Right cardiac atrium (tissue), 5 donors: ENCODE measurements at regions of chr5 and their contacts with region 1.

Region 1: GRCh38 chr5:149489605-149490037 is 61.6 kb downstream of the CSNK1A1 start:
- DNase-seq: peak in 2 of 3 donors; percentile 68 to 85
- ATAC-seq: peak in 1 of 2 donors; percentile 5
- H3K4me3 ChIP-seq: no peak overlapping the region
- H3K27ac ChIP-seq: peak overlapping the region; percentile 55
- H3K4me1 ChIP-seq: peaks cover 9% of the 10 kb centered on the region
- H3K27me3 ChIP-seq: no peaks in the 10 kb centered on the region

Region 2: DNA sequence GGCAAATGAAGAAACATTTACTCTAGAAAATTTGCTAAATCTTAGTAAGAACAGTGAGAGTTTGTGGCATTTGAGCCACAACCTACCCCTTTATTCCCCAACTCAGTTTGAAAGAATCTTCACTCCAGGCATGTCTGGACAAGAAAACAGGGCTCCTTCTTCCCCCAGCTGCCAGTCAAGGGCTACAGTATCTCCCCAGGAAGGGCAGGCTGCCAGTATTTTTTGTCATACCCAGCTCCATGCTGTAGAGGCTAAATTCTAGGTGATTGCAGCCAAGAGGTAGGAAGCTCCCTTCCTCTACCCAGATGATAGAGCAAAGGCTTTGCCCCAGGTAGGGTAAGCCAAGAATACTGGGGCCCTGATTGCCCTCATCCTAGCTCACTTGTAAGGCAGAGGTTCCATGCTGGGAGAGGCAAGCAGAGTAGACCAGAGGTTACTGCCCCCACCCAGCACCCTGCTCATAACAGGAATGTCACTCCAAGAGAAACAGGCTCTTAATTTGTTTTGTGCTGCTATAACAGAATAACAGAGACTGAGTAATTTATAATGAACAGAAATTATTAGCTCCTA is 164.4 kb before region 1 on chr5:
- intact Hi-C with region 1: no loop called
- DNase-seq: no peak
- ATAC-seq: no peak
- H3K4me3 ChIP-seq: no peak overlapping the region
- H3K27ac ChIP-seq: peak overlapping the region; percentile 23
- H3K4me1 ChIP-seq: peaks cover 5% of the 10 kb centered on the region
- H3K27me3 ChIP-seq: no peaks in the 10 kb centered on the region

Region 3: GRCh38 chr5:149442563-149443182 is 46.9 kb before region 1 on chr5:
- intact Hi-C with region 1: loop called in 2 of 4 experiments (anchors 10 kb)
- DNase-seq: peak; percentile 81 to 95 (median 95)
- ATAC-seq: peak; percentile 77 to 84
- H3K4me3 ChIP-seq: no peak overlapping the region
- H3K27ac ChIP-seq: peak overlapping the region; percentile 96
- H3K4me1 ChIP-seq: peaks cover 12% of the 10 kb centered on the region
- H3K27me3 ChIP-seq: no peaks in the 10 kb centered on the region